ENCODE measurements at regions of chr18 and their contacts with region 1.

Region 1: GRCh38 chr18:76480913-76481312 is 14.1 kb downstream of the ZNF516 start:
- DNase-seq: no peak
- H3K4me3 ChIP-seq: no peak overlapping the region
- H3K27ac ChIP-seq: no peak overlapping the region
- H3K4me1 ChIP-seq: no peaks in the 10 kb centered on the region
- H3K27me3 ChIP-seq: no peaks in the 10 kb centered on the region
- CTCF ChIP-seq: no peak
- POLR2A ChIP-seq: no peak

Region 2: DNA sequence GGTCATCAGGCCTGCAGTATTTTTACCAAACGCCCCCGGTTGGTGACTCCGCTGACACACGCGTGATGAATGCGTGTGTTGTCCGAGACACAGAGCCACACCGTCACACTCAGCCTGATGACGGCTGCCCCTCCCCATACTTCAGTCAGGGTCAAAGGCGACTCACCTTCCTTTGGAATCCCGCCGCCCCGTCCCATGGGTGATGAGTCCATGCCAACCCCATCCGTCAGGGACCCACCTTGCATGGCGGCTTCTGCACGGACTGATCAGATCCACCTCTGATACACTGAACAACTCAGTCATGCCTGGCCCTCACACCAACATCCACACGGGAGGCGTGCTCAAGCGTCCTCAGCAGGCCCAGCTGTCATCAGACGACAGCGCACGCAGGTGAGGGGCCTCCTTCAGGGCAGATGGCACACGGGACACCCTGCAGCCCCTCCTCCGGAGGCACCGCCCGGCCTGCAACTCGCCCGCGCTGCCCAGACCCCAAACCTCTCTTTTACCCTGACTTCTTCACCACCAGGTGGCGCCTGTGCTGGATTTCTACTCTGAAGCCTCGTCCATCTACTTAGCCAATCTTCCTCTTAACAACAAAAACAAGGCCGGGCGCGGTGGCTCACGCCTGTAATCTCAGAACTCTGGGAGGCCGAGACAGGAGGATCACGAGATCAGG is 75.1 kb before region 1 on chr18:
- intact Hi-C with region 1: loop called (anchors 10 kb)
- DNase-seq: peak; percentile 70
- H3K4me3 ChIP-seq: no peak overlapping the region
- H3K27ac ChIP-seq: no peak overlapping the region
- H3K4me1 ChIP-seq: no peaks in the 10 kb centered on the region
- H3K27me3 ChIP-seq: no peaks in the 10 kb centered on the region
- CTCF ChIP-seq: peak; percentile 35 to 78 (median 62)
- POLR2A ChIP-seq: no peak